Left colon (tissue), 2 donors: ENCODE measurements at regions of chr17 and their contacts with region 1.

Region 1: GRCh38 chr17:79991140-79991923 is 44.3 kb downstream of the TBC1D16 start:
- DNase-seq: peak; percentile 89 to 94
- ATAC-seq: peak; percentile 78

Region 2: DNA sequence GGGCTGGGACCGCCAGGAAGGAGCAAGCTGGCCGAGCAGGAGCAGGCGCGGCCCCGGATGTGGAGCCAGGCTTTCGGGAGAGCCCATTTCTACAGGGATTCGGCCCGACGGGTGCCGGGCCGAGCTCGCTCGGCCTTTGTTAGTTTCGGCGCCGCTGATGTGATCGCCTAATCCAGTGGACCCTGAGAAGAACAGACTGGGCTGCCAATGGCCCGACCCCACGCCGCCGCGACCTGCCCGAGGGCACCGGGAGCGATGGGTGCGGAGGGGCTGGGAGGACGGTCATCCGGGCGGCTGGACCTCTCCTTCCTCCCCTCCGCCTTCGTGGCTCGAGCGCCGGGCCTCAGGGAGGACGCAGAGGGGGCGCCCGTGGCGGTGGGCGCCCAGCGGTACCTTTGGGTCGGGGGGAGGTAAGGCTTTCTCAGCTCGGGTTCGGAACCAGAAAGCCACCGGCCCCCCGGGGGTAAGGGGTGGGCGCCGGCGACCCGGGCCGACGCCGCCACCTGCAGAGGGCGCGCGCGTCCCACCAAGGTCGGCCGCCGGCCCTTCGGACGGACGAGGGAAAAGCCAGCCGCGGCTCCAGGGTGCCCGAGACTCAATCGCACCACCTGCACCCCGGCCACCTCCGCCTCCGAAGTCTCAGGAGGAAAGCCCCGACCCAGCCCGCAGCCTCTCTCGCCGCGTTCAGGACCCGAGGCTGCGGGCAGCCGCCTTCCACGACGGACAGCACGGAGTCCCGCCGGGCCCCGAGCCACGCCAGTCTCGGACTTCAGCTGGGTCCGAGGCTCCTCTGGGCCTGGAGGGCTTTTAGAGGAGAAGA is 201.6 kb before region 1 on chr17:
- intact Hi-C with region 1: loop called in 1 of 2 experiments (anchors 10 kb)
- DNase-seq: peak in 1 of 2 donors; percentile 62
- ATAC-seq: peak; percentile 67